PC-9 (cell line): ENCODE measurements at regions of chr11 and their contacts with region 1.

Region 1: GRCh38 chr11:95991545-95991944 is 67.6 kb upstream of the MTMR2 start:
- DNase-seq: peak in 1 of 2 experiments; percentile 56
- H3K4me3 ChIP-seq: no peak overlapping the region
- H3K27ac ChIP-seq: peak overlapping the region; percentile 75
- H3K4me1 ChIP-seq: peaks cover 30% of the 10 kb centered on the region
- H3K27me3 ChIP-seq: no peaks in the 10 kb centered on the region
- CTCF ChIP-seq: no peak

Region 2: DNA sequence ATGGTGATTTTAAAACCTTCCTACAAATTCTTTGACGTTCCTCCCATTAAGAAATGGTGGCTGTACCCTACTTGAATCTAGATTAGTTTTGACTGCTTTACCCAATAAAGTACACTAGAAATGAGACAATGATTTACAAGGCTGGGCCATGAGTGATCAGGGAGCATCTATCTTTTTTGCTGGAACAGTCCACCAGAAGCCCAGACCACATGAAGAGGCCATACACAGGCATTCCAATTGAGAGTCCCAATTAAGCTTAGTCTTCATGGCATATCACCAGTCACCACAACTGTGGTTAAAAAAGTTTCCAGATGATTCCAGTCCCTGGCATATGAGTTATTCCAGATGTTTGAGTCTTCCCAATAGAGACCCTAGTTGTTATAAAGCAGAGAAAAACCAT is 241.4 kb before region 1 on chr11:
- CTCF ChIA-PET with region 1: no interaction called
- POLR2A ChIA-PET with region 1: no interaction called
- intact Hi-C with region 1: no loop called
- DNase-seq: no peak
- H3K4me3 ChIP-seq: no peak overlapping the region
- H3K27ac ChIP-seq: no peak overlapping the region
- H3K4me1 ChIP-seq: no peaks in the 10 kb centered on the region
- H3K27me3 ChIP-seq: 0 out of 2 replicates have a peak, but pooled peaks cover 6% of the 10 kb centered on the region
- CTCF ChIP-seq: no peak

Region 3: DNA sequence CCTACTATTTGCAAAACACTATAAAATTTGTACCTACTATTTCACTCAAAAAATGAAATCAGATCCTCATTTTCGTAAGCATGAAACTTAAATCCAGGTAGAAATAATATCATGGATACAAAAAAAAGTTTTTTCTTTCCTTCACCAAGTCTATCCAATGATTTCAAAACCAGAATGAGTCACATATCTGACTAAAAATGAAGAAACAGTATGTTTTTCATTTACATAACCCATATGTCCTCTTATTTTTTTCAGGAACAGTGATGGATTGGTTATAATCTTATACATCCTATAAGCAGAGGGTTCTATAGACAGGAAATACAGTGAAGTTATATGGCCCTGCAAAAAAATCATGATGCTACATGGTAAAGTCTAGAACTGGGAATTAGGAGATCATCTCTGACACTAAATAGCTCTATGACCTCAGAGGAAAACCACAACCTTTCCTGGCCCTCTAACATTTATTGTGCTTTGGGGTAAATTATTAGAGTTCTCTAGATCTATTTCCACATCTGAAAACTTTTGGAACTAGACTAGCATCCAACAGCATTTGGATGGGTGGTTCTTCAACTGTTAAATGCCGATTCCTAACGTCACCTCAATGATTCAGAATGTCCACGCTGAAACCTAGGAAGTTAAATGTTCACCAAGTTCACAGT is 78.5 kb before region 1 on chr11:
- CTCF ChIA-PET with region 1: no interaction called
- POLR2A ChIA-PET with region 1: no interaction called
- intact Hi-C with region 1: no loop called
- DNase-seq: peak in 1 of 2 experiments; percentile 48
- H3K4me3 ChIP-seq: no peak overlapping the region
- H3K27ac ChIP-seq: peak overlapping the region; percentile 15; the same call in 1 of the 2 replicates
- H3K4me1 ChIP-seq: peaks cover 34% of the 10 kb centered on the region
- H3K27me3 ChIP-seq: no peaks in the 10 kb centered on the region
- CTCF ChIP-seq: no peak

Region 4: DNA sequence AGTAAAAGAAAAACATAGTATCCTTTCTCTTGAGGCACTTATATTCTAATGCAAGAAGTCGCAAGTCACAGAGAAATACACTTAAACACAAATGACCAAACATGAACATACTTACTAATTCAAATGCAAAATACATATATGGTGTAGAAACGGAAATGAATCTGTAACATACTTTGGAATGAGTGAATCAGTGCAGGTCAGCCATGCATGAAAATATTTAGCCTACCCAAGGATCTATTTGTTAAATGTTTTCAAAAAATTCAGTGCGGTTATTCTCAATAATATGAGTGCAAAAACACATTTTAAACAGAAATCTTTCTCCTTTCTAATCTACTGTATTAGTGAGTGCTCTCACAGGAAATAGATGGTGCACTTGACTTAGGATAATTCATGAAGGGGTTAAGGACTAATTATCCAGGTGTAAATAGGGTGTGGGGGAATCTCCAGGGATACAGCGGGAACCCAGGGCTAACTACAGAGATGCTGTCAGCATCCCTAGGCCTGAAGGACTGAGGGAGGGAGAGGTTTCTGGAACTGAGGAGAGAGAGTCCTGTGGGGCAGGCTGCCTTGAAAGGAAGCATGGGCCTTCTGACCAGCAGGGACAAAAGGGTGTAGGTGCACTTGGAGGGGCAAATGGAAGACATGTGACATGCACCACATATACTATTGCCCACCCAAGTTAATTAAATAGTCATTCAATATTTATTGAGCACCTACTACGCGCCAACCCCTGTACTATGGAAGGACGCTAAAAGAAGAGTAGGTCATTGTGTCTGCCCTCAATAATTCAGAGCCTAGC is 212.2 kb after region 1 on chr11:
- CTCF ChIA-PET with region 1: no interaction called
- POLR2A ChIA-PET with region 1: no interaction called
- intact Hi-C with region 1: loop called (anchors 1 kb)
- DNase-seq: no peak
- H3K4me3 ChIP-seq: no peak overlapping the region
- H3K27ac ChIP-seq: no peak overlapping the region
- H3K4me1 ChIP-seq: peaks cover 35% of the 10 kb centered on the region
- H3K27me3 ChIP-seq: no peaks in the 10 kb centered on the region
- CTCF ChIP-seq: no peak